Heart right ventricle (tissue), 16 donors: ENCODE measurements at regions of chr22 and their contacts with region 1.

Region 1: GRCh38 chr22:22709719-22710445 is 65.5 kb downstream of the GGTLC2 start:
- DNase-seq: no peak
- ATAC-seq: no peak
- H3K4me3 ChIP-seq: no peak overlapping the region
- H3K27ac ChIP-seq: no peak overlapping the region
- H3K4me1 ChIP-seq: no peaks in the 10 kb centered on the region
- H3K27me3 ChIP-seq: peaks cover 0 to 23% (median 3%) of the 10 kb centered on the region in 7 donors
- CTCF ChIP-seq: peak in 2 of 9 donors; percentile 3 to 10

Region 2: DNA sequence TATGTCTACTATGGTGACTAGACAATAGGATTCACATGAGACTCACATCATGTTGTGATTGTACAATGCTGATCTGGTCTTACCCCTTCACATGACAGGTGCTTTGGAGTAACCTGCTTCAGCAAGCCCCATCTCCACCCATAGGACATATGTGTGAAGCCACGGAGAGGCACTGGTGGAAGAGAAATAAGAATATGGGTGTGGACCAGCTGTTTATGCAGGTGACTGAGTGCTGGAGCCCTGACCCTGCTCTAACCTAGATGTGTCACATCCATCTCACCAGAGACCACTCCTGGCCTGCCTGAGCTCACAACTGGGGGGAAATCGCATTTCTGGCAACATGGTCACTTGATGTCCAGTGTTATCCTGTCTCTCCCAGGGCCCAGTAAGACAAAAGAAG is 54.2 kb after region 1 on chr22:
- intact Hi-C with region 1: loop called in 3 of 10 experiments (anchors 2 to 5 kb)
- DNase-seq: no peak
- ATAC-seq: no peak
- H3K4me3 ChIP-seq: no peak overlapping the region
- H3K27ac ChIP-seq: no peak overlapping the region
- H3K4me1 ChIP-seq: peaks cover 0 to 3% (median 0%) of the 10 kb centered on the region in 9 donors
- H3K27me3 ChIP-seq: peaks cover 0 to 18% (median 14%) of the 10 kb centered on the region in 7 donors
- CTCF ChIP-seq: no peak

Region 3: DNA sequence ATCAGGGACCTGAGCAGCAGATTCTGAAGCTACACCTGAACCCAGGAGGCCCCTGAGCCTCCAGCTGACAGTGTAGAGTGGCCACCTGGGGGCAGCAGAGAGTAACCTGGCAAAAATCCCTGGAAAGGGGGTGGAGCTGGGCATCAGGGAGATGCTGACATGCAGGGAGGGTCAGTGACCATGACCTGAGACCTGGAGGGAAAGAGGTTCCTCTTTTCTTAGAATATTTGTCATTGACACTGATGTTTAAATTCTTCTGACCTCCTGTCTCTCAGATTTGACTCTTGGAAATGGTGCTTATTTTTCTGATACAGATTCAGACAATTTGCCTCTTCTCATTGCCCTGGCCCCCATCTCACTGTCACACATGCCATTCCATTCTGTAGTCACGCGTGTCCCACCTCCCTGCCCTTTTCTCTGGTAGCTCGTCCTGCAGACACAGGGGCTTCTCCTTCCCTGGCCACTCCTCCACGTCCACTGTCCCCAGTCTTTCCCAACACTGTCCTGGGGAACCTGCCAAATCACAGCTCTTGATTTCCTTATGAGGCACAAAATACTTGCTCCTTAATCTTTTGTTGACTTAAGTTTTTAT is 60.5 kb after region 1 on chr22:
- intact Hi-C with region 1: loop called in 4 of 10 experiments (anchors 2 to 5 kb)
- DNase-seq: peak; percentile 25 to 30
- ATAC-seq: peak in 3 of 8 donors; percentile 23 to 44 (median 36)
- H3K4me3 ChIP-seq: no peak overlapping the region
- H3K27ac ChIP-seq: no peak overlapping the region
- H3K4me1 ChIP-seq: peaks cover 0 to 11% (median 0%) of the 10 kb centered on the region in 9 donors
- H3K27me3 ChIP-seq: peaks cover 0 to 37% (median 20%) of the 10 kb centered on the region in 7 donors
- CTCF ChIP-seq: peak; percentile 27 to 72 (median 59)

Region 4: DNA sequence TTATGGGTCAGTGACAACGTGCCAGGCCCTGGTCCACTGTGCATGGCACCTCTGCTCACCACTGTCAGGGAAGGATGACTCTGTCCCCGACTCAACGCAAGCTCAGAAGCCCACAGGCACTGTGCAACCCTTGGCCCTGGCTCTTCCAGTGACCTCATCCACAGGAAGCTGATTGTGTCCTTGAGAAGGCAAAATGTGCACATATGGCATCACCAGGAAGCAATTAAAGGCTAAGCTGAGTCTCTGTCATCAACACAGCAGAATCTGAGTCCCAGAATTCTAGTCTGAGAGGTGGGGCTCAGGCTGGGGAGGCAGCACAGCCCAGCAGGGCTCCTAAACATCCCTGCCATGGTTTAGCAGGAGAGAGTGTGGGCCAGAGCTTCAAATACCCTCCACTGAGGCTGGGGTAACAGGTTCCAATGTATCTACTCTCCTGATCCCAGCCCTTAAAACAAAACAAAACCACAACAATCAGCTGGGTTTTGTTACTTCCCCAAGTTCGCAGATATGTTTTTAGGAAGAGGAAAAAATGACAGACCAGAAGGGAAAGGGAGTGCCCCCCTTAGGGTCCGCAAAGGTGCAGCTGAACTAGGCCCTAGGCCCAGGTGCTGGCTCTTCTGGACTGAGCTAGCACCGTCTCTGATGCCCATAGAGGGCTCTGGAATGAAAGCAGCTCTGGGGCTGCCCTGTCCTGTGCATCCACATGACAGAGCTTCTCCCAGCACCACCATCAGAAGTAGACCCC is 327.0 kb after region 1 on chr22:
- intact Hi-C with region 1: no loop called
- DNase-seq: no peak
- ATAC-seq: peak; percentile 28 to 73 (median 56)
- H3K4me3 ChIP-seq: no peak overlapping the region
- H3K27ac ChIP-seq: no peak overlapping the region
- H3K4me1 ChIP-seq: peaks cover 0 to 8% (median 5%) of the 10 kb centered on the region in 9 donors
- H3K27me3 ChIP-seq: peaks cover 0 to 22% (median 10%) of the 10 kb centered on the region in 7 donors
- CTCF ChIP-seq: no peak